ENCODE measurements at regions of chr17 and their contacts with region 1.

Region 1: DNA sequence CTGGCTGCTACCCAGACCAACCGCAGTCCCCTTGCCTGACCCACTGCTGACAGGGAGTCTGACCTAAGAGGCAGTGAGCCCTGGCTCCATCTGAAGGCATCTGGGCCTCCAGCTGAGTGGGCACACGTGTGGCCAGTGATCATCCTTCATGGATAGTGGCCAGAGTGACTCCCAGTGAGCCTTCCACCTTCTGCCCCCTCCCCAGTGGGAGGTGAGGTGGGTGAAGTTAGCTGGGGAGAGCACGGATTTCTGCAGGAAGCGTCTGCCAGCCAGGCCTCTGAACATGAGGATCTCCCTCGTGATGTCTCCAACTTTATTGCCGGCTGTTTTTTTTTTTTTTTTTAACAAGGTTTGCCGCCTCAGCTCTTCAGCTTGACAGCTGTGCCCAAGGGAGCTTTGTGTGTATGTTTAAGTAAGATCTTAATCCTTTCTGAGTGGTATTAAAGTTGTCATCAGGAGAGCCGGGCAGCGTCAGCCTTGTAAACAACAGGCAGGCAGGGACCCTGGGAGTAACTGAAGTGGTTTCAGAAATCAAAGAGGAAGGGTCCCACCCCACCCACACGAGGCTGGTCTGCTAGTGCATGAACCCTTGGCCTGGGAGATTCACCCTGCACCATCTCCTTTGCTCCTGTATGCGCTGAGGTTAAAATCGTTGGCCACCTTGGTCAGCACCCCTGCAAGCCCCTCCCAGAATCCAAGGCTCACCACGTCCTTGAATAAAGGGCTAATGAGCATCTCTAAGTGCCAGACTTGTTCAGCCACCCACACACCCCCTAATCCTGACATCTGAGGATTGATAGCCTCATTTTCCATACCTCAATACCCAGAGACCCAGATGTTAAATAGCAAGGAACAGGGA is 33.3 kb downstream of the RHBDL3 start:
- DNase-seq: no peak
- H3K4me3 ChIP-seq: no peak overlapping the region
- H3K27ac ChIP-seq: no peak overlapping the region
- H3K4me1 ChIP-seq: no peaks in the 10 kb centered on the region
- H3K27me3 ChIP-seq: no peaks in the 10 kb centered on the region
- CTCF ChIP-seq: no peak

Region 2: DNA sequence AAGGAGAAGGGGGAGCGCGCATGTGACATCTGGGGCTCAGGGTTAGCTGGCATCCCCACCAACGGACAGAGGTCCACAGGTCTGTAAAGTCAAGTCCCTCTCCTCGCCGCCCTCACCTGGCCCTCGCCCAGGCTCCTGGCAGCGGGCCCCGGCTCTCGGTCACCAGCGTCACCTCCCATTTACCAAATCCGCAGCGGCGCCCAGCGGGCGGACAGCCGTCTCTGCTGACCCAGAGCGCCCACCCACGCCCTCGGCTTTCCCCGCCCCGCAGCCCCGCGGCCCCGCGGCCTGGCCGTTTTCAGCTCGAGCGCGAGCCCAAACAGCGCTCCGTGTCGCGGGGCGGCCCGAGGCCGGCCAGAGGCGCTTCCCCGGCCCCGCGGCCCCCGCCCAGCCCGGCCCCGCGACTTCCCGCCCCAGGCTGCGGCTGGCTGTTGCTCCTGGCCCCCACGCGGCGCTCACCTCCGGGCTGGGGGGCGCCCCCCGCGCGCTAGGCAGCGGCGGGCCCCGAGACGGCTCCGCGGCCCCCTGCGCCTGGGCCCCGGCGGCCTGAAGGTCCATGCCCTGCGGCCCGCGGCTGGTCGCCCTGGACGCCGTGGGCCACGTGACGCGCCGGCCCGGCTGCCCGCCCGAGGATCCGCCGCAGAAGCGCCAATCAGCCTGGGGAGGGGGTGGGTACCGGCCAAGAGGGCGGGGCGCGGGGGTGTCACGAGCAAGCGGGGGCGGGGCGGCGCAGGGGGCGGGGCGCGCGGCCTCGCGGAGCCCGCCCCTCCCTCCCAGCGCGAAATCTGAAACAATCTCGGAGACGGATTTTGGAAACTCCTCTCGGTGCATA is 440.1 kb before region 1 on chr17 and contains the start of gene COPRS:
- CTCF ChIA-PET with region 1: no interaction called
- dilution Hi-C with region 1: no loop called
- in situ Hi-C with region 1: no loop called
- intact Hi-C with region 1: no loop called
- DNase-seq: peak; percentile 70
- H3K4me3 ChIP-seq: peak within 1 kb of the TSS; percentile 69 to 81 (median 73)
- H3K27ac ChIP-seq: peak within 1 kb of the TSS; percentile 42
- H3K4me1 ChIP-seq: peaks cover 20% of the 10 kb centered on the region
- H3K27me3 ChIP-seq: no peaks in the 10 kb centered on the region
- CTCF ChIP-seq: no peak
- total RNA-seq, gene COPRS: 39.8 to 41.9 TPM

Region 3: DNA sequence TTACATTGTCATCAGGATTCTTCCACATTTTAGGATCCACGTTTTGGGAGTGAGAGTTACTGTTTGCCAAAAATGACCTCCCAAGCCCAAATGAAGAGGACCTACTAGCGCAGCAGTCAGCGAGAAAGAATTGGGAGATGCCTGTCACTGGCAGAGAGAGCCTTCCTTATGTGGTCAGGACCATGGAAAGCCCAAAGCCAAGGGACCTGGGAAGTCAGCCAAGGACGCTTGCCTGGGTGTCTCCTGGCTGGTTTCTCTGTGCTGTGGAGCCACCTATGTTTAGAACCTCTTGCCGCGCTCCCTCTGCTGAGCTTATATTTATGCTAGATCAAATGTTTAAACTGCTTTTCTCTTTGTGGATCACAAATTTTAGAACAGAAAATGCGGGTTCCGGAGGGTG is 58.2 kb before region 1 on chr17:
- CTCF ChIA-PET with region 1: no interaction called
- dilution Hi-C with region 1: no loop called
- in situ Hi-C with region 1: loop called in 1 of 2 experiments (anchors 10 kb)
- intact Hi-C with region 1: no loop called
- DNase-seq: peak; percentile 14
- H3K4me3 ChIP-seq: no peak overlapping the region
- H3K27ac ChIP-seq: no peak overlapping the region
- H3K4me1 ChIP-seq: no peaks in the 10 kb centered on the region
- H3K27me3 ChIP-seq: no peaks in the 10 kb centered on the region
- CTCF ChIP-seq: no peak

Region 4: GRCh38 chr17:32253117-32253611 is 45.8 kb before region 1 on chr17:
- CTCF ChIA-PET with region 1: interaction called, 12 read pairs
- dilution Hi-C with region 1: no loop called
- in situ Hi-C with region 1: loop called in 1 of 2 experiments (anchors 10 kb)
- intact Hi-C with region 1: no loop called
- DNase-seq: peak; percentile 61
- H3K4me3 ChIP-seq: no peak overlapping the region
- H3K27ac ChIP-seq: no peak overlapping the region
- H3K4me1 ChIP-seq: no peaks in the 10 kb centered on the region
- H3K27me3 ChIP-seq: peaks cover 2% of the 10 kb centered on the region
- CTCF ChIP-seq: peak; percentile 100

Region 5: DNA sequence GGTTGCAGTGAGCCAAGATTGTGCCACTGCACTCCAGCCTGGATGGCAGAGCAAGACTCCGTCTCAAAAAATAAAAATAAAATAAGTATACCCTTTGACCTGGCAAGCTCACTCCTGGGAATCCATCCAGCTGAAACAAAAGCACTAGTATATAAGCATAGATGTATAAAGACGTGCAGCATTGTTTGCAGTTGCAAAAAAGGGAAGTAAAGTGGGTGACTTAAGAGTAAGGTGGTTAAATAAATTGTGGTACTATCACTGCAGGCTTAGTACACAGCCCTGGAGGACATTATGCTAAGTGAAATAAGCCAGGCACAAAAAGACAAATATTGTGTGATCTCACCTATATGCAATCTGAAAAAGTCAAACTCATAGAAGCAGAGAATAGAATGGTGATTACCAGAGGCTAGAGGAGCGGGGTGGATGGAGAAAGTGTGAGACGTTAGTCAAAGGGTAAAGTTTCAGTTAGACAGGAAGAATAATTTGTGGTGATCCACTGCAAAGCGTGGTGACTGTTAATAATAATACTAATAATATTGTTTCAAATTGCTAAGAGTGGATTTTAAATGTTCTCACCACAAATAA is 465.0 kb after region 1 on chr17:
- CTCF ChIA-PET with region 1: no interaction called
- dilution Hi-C with region 1: no loop called
- in situ Hi-C with region 1: no loop called
- intact Hi-C with region 1: no loop called
- DNase-seq: no peak
- H3K4me3 ChIP-seq: no peak overlapping the region
- H3K27ac ChIP-seq: no peak overlapping the region
- H3K4me1 ChIP-seq: no peaks in the 10 kb centered on the region
- H3K27me3 ChIP-seq: no peaks in the 10 kb centered on the region
- CTCF ChIP-seq: no peak